Sigmoid colon (tissue), 7 donors: ENCODE measurements at regions of chr3 and their contacts with region 1.

Region 1: GRCh38 chr3:69739204-69740102 is at the start of gene MITF:
- DNase-seq: peak; percentile 96
- H3K4me3 ChIP-seq: peak within 1 kb of the TSS; percentile 80 to 94 (median 86)
- H3K27ac ChIP-seq: peak within 1 kb of the TSS; percentile 85 to 93 (median 90)
- H3K4me1 ChIP-seq: peaks cover 0 to 51% (median 42%) of the 10 kb centered on the region in 4 donors
- H3K27me3 ChIP-seq: no peaks in the 10 kb centered on the region
- CTCF ChIP-seq: no peak
- EP300 ChIP-seq: no peak
- POLR2A ChIP-seq: peak in 1 of 2 donors; percentile 74
- total RNA-seq, gene MITF: 65.4 to 73.2 (median 67.1) TPM

Region 2: DNA sequence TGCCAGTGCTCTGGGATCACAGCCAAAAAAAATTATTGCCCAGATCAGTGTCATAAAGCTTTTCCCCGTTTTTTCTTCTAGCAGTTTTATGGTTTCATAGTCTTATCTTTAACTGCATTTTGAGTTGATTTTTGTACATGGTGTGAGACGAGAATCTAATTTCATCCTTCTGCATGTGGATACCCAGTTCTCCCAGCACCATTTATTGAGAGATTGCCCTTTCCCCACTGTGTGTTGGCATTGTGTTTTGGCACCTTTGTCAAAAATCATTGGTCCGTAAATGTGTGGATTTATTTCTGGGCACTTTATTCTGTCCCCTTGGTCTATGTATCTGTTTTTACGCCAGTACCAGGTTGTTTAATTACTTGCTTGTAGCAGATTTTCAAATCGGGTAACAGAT is 929.9 kb before region 1 on chr3:
- intact Hi-C with region 1: no loop called
- DNase-seq: no peak
- H3K4me3 ChIP-seq: no peak overlapping the region
- H3K27ac ChIP-seq: no peak overlapping the region
- H3K4me1 ChIP-seq: no peaks in the 10 kb centered on the region
- H3K27me3 ChIP-seq: no peaks in the 10 kb centered on the region
- CTCF ChIP-seq: no peak
- EP300 ChIP-seq: no peak
- POLR2A ChIP-seq: no peak

Region 3: GRCh38 chr3:69838217-69838616 is 98.8 kb after region 1 on chr3:
- intact Hi-C with region 1: no loop called
- DNase-seq: no peak
- H3K4me3 ChIP-seq: no peak overlapping the region
- H3K27ac ChIP-seq: no peak overlapping the region
- H3K4me1 ChIP-seq: peaks cover 0 to 61% (median 37%) of the 10 kb centered on the region in 4 donors
- H3K27me3 ChIP-seq: no peaks in the 10 kb centered on the region
- CTCF ChIP-seq: no peak
- EP300 ChIP-seq: no peak
- POLR2A ChIP-seq: no peak

Region 4: DNA sequence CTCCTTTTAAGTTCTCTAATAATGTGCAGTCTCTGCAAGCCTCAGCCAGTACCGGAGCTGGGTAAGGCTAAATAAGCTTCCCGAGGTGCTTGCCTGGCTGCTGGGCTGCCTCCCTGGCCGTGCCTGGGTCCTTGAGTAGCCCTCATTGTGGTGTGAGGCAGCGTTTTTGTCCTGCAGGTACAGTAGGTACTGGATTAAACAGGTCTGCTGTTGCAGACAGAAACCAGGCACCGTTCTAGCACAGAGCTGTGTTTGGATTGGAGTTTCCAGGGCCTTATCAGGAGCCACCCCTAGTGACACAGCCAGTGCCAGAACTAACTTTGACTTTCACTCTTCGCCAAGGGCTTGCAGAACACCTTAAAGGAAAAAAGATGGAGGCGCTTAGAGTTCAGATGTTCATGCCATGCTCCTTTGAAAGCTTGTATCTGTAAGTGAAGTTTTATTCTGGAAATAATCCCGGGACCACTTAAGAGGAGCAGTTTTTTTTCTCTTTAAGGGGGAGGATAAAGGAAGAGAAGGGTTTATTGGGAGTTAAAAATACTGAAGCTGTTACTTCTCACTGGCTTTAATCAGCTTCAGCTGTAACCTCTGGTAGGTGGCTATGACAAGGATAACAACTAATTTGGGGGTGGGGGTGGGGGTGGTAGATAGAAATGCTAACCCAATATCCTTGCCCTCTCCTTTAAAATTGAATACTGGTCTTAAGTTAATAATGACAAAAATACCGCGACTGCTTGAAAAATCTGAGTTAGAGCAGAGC is 126.6 kb after region 1 on chr3:
- intact Hi-C with region 1: loop called (anchors 5 kb)
- DNase-seq: peak; percentile 64
- H3K4me3 ChIP-seq: peak overlapping the region in 3 of 4 donors; percentile 7 to 25 (median 24)
- H3K27ac ChIP-seq: peak overlapping the region; percentile 45 to 81 (median 75)
- H3K4me1 ChIP-seq: peaks cover 0 to 84% (median 62%) of the 10 kb centered on the region in 4 donors
- H3K27me3 ChIP-seq: no peaks in the 10 kb centered on the region
- CTCF ChIP-seq: no peak
- EP300 ChIP-seq: no peak
- POLR2A ChIP-seq: no peak

Region 5: DNA sequence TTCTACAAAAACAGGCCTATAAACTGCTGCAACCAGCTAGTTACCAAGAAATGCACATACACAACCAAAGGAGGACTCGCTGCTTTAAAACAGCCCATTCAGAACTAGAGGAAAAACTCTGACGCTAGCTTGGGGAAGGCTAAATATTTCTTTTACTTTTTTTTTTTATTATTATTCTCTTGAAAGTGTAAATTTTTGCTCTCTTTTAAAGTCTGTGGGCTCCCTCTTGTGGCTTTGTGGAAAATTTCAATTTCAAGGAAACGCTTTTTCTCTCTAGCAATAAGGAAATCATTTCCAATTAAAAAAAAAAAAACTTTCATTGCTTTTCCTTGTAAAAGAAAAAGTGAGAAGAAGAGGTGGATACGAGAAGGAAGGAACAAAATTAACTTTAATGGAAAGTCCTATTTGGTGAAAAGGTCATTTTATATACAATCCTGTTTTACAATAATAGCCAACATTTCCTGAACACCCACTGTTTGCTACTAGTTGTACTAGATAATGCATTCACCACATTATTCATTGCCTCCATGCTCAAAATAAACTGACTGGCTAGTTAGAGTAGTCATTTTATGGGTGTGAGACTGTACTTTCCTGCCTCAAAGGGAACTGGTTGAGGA is 208.9 kb after region 1 on chr3:
- intact Hi-C with region 1: loop called (anchors 5 kb)
- DNase-seq: no peak
- H3K4me3 ChIP-seq: no peak overlapping the region
- H3K27ac ChIP-seq: peak overlapping the region in 3 of 4 donors; percentile 1 to 22 (median 13)
- H3K4me1 ChIP-seq: peaks cover 0 to 20% (median 11%) of the 10 kb centered on the region in 4 donors
- H3K27me3 ChIP-seq: no peaks in the 10 kb centered on the region
- CTCF ChIP-seq: peak; percentile 13 to 60 (median 22)
- EP300 ChIP-seq: no peak
- POLR2A ChIP-seq: no peak